CD8-positive, alpha-beta T cell (primary cell): ENCODE measurements at regions of chr12 and their contacts with region 1.

Region 1: GRCh38 chr12:110449799-110450497 is at the start of gene ARPC3:
- DNase-seq: peak; percentile 91 to 98 (median 95)
- ATAC-seq: peak; percentile 95
- H3K4me3 ChIP-seq: peak within 1 kb of the TSS; percentile 80 to 95
- H3K4me3 Mint-ChIP-seq: peak within 1 kb of the TSS; percentile 100
- H3K27ac ChIP-seq: peak within 1 kb of the TSS; percentile 93 to 98
- H3K27ac Mint-ChIP-seq: peak within 1 kb of the TSS; percentile 100
- H3K4me1 ChIP-seq: peaks cover 31% of the 10 kb centered on the region
- H3K4me1 Mint-ChIP-seq: peaks cover 35% of the 10 kb centered on the region
- H3K27me3 ChIP-seq: no peaks in the 10 kb centered on the region
- H3K27me3 Mint-ChIP-seq: no peaks in the 10 kb centered on the region
- CTCF ChIP-seq: peak; percentile 76
- total RNA-seq, gene ARPC3: 123 to 136 TPM

Region 2: DNA sequence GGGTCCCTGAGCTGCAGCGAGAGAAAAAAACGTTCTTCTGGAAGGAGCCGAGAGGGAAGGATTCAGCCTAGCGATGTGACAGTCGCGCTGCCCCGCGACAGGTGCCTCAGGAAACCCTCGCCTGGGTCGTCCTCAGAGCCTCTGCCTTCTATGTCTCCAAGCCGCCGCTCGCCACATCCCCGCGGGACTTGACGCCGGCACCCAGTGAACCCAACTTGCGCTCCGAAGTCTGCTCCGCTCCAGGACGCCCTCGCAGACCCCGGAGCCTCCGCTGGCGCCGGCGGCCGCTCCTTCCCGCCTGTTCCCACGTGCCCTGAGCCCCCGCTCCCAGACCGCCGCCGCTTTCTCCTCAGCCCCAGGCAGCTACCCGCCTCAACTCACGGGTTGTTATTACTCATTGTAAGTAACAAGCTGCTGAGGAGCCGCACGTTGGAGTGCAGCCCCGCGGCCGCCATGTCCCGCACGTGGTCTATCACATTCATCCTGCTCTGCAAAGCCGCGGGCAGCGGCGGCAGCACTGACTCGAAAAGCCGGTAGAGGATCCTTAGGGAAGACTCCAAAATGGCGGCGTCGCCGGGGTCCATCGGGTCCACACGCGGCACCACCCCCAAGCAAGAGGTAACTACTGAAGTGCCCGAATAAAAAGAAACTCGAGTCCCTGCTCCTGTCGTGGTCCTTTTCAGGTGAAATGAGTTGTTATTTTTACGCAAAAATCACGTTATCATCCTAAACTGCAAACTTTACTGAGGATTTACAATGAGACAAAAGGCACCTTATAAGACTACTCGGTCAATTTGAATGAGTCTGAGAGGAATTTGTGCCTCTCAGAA is 46.6 kb before region 1 on chr12 and contains the start of gene ANAPC7:
- CTCF ChIA-PET with region 1: interaction called, 3 read pairs
- POLR2A ChIA-PET with region 1: interaction called, 4 read pairs
- intact Hi-C with region 1: loop called in 1 of 2 experiments (anchors 1 kb)
- DNase-seq: peak; percentile 69 to 93 (median 87)
- ATAC-seq: peak; percentile 96
- H3K4me3 ChIP-seq: peak within 1 kb of the TSS; percentile 87 to 89
- H3K4me3 Mint-ChIP-seq: peak within 1 kb of the TSS; percentile 100
- H3K27ac ChIP-seq: peak within 1 kb of the TSS; percentile 78 to 96
- H3K27ac Mint-ChIP-seq: peak within 1 kb of the TSS; percentile 98
- H3K4me1 ChIP-seq: peaks cover 20% of the 10 kb centered on the region
- H3K4me1 Mint-ChIP-seq: peaks cover 33% of the 10 kb centered on the region
- H3K27me3 ChIP-seq: no peaks in the 10 kb centered on the region
- H3K27me3 Mint-ChIP-seq: no peaks in the 10 kb centered on the region
- CTCF ChIP-seq: no peak
- total RNA-seq, gene ANAPC7: 22.1 to 23.2 TPM

Region 3: DNA sequence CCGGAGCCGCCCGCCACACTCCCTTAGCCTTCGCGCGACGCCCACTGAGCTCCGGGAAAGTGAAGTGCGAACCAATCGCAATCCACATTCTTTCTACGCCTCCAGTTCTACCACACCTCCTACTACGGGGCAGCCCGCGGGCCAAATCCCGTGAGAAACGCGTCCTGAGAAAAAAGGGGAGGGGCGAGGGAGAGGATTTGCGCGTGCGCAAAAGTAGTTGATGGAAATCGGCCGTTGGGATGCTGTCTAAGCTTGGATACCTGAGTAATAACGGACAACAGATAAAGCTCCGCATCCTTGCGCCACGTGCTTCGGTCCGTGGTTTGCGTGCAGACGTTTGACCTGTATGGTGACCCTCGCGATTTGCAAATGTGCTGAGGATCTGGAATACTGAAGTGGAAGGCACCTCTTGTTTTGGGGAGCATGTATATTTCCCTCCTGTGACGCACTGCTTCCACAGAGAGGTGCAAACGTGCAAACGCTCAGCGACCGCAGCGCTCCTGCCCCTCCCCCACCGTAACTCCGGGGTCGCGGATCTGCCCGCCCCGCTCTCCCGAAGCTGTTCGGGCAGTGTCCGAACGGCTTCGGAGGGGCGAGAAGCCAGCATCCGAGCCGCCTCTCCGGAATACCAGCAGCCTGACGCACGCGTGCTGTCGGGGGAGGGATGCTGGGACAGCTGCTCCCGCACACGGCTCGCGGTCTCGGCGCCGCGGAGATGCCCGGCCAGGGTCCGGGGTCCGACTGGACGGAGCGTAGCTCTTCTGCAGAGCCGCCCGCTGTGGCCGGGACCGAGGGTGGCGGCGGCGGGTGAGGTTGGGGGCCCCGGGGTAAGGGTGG is 18.5 kb after region 1 on chr12 and contains the starts of genes FAM216A and GPN3:
- CTCF ChIA-PET with region 1: interaction called, 102 read pairs
- POLR2A ChIA-PET with region 1: interaction called, 73 read pairs
- intact Hi-C with region 1: loop called (anchors 1 kb)
- DNase-seq: peak; percentile 89 to 98 (median 95)
- ATAC-seq: peak; percentile 89
- H3K4me3 ChIP-seq: peak within 1 kb of the TSS; percentile 90 to 96
- H3K4me3 Mint-ChIP-seq: peak within 1 kb of the TSS; percentile 99
- H3K27ac ChIP-seq: peak within 1 kb of the TSS; percentile 74 to 87
- H3K27ac Mint-ChIP-seq: peak within 1 kb of the TSS; percentile 95
- H3K4me1 ChIP-seq: peaks cover 23% of the 10 kb centered on the region
- H3K4me1 Mint-ChIP-seq: peaks cover 43% of the 10 kb centered on the region
- H3K27me3 ChIP-seq: no peaks in the 10 kb centered on the region
- H3K27me3 Mint-ChIP-seq: no peaks in the 10 kb centered on the region
- CTCF ChIP-seq: no peak
- total RNA-seq, gene FAM216A: 3.5 to 4.5 TPM
- total RNA-seq, gene GPN3: 5.9 to 6.2 TPM

Region 4: GRCh38 chr12:110549716-110550115 is 99.8 kb after region 1 on chr12:
- CTCF ChIA-PET with region 1: interaction called, 19 read pairs
- POLR2A ChIA-PET with region 1: interaction called, 5 read pairs
- intact Hi-C with region 1: loop called (anchors 1 to 2 kb)
- DNase-seq: no peak
- ATAC-seq: no peak
- H3K4me3 ChIP-seq: no peak overlapping the region
- H3K4me3 Mint-ChIP-seq: no peak overlapping the region
- H3K27ac ChIP-seq: no peak overlapping the region
- H3K27ac Mint-ChIP-seq: no peak overlapping the region
- H3K4me1 ChIP-seq: no peaks in the 10 kb centered on the region
- H3K4me1 Mint-ChIP-seq: peaks cover 30% of the 10 kb centered on the region
- H3K27me3 ChIP-seq: no peaks in the 10 kb centered on the region
- H3K27me3 Mint-ChIP-seq: no peaks in the 10 kb centered on the region
- CTCF ChIP-seq: no peak

Region 5: DNA sequence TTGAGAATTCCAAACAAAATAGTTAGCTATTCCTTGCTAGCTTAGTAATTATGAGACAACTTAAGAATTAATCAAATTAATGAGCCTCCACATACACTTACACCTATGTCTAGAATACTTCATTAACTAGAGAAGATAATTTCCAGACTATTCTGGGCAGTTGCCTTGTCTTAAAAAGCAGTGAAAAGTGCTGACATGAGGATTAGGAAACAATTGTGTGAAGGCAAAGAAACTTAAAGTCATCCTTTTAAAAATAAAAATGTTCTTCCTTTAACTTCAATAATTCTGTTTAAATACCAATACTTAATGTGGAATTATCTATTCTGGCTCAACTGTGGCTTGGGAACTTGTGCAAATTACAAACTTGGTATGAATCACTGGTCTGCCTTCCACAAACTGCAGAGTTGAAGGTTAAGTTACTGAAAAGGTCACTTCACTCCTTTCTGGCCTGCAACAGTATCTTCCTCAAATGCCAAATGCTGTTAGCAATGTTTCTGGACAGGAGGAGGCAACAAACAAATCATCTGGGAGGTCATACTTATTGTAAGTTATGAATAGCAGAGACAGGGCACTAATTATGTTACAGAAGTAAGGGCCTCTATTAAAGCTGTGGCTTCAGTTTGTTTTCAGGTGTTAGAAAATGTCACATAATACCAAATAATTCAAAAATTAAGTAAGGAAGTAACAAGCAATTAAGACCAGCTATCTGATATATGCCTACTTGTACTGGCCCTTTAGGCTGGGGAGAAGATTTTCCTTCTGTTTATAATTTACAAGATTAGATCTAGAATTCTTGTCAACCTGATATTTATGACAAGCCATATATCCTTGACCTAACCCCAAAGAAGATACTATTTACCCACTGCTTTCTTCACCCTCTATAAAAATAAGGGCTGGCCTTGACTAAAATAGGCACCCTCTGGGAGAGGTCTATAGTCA is 114.0 kb after region 1 on chr12:
- CTCF ChIA-PET with region 1: interaction called, 14 read pairs
- POLR2A ChIA-PET with region 1: no interaction called
- intact Hi-C with region 1: no loop called
- DNase-seq: no peak
- ATAC-seq: no peak
- H3K4me3 ChIP-seq: no peak overlapping the region
- H3K4me3 Mint-ChIP-seq: no peak overlapping the region
- H3K27ac ChIP-seq: peak overlapping the region; percentile 9 to 61
- H3K27ac Mint-ChIP-seq: peak overlapping the region; percentile 82
- H3K4me1 ChIP-seq: peaks cover 61% of the 10 kb centered on the region
- H3K4me1 Mint-ChIP-seq: peaks cover 72% of the 10 kb centered on the region
- H3K27me3 ChIP-seq: no peaks in the 10 kb centered on the region
- H3K27me3 Mint-ChIP-seq: no peaks in the 10 kb centered on the region
- CTCF ChIP-seq: no peak

Region 6: DNA sequence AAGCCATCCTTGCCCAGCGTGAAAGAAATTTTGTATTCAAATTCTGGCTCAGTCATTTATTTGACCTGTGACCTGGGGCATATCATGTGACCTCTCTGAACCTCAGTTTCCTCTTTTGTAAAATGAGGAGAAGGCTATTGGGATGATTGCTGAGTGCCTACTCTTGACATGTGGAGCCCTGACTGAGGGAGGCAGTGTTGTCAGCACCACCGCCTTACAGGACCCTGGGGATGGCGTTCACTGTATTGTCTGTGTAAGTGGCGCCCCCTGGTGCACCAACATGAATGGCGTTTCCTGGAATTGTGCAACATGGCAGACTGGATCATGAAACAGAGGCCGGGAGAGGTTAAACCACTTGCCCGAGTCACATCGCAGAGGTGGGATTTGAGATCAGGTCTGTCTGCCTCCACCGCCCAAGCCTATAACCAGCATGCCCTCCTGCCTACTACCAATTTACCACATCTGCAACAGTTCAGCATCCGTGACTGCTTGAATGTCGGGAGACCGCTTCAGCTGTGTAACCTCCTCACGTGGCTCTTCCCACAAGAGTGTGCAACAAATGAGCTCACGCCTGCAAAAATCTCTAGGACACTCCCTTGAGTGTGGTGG is 376.7 kb after region 1 on chr12:
- CTCF ChIA-PET with region 1: interaction called, 6 read pairs
- POLR2A ChIA-PET with region 1: no interaction called
- intact Hi-C with region 1: loop called (anchors 1 kb)
- DNase-seq: peak; percentile 64 to 85 (median 78)
- ATAC-seq: peak; percentile 95
- H3K4me3 ChIP-seq: no peak overlapping the region
- H3K4me3 Mint-ChIP-seq: peak overlapping the region; percentile 65
- H3K27ac ChIP-seq: no peak overlapping the region
- H3K27ac Mint-ChIP-seq: no peak overlapping the region
- H3K4me1 ChIP-seq: no peaks in the 10 kb centered on the region
- H3K4me1 Mint-ChIP-seq: peaks cover 5% of the 10 kb centered on the region
- H3K27me3 ChIP-seq: no peaks in the 10 kb centered on the region
- H3K27me3 Mint-ChIP-seq: peaks cover 9% of the 10 kb centered on the region
- CTCF ChIP-seq: peak; percentile 80